ENCODE measurements at regions of chr2 and their contacts with region 1.

Region 1: GRCh38 chr2:31107591-31108300 is 30.5 kb downstream of the GALNT14 start:
- DNase-seq: no peak
- H3K4me3 ChIP-seq: no peak overlapping the region
- H3K27me3 ChIP-seq: no peaks in the 10 kb centered on the region
- CTCF ChIP-seq: no peak

Region 2: GRCh38 chr2:31089645-31090044 is 18.1 kb before region 1 on chr2:
- CTCF ChIA-PET with region 1: no interaction called
- POLR2A ChIA-PET with region 1: no interaction called
- DNase-seq: no peak
- H3K4me3 ChIP-seq: no peak overlapping the region
- H3K27me3 ChIP-seq: no peaks in the 10 kb centered on the region
- CTCF ChIP-seq: no peak

Region 3: GRCh38 chr2:31151501-31151900 is 43.8 kb after region 1 on chr2:
- CTCF ChIA-PET with region 1: no interaction called
- POLR2A ChIA-PET with region 1: interaction called, 17 read pairs
- DNase-seq: no peak
- H3K4me3 ChIP-seq: no peak overlapping the region
- H3K27me3 ChIP-seq: no peaks in the 10 kb centered on the region
- CTCF ChIP-seq: no peak

Measured in BJ (cell line).